Activated CD8-positive, alpha-beta T cell treated with anti-CD3 and anti-CD28 coated beads, Interleukin-2, amount 10 ng/mL, durations not matched to agents 7 days and 5 days (primary cell): ENCODE measurements at regions of chr5 and their contacts with region 1.

Region 1: DNA sequence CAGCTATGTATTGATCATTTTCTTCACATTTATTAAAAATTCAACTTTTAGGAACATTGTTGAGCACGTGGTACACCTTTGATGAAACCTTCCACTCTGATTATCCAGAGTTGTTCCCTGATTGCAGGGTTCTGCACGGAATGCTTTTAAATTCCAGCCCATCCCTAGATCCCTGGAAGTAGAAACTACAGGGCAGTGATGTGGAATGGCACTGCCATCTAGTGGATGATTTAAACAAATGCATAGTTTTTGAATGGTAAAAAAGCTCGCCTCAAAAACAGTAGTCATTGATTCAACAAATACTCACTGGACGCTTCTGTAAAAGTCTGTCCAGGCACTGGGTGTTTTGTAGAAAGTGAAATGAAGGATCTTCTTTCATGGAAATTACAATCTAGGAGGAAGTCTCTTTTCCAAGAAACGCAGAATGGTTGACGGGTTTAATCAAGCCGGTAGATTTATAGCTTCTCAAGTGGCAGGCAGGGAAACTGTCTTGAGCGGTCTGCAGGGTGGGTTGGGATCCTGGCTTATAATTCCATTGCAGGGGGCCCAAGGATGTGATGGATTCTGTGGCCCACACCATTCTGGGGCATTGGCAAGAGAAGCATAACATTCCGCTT is 118.4 kb downstream of the ARHGAP26 start:
- DNase-seq: peak; percentile 24
- ATAC-seq: no peak
- H3K4me3 Mint-ChIP-seq: no peak overlapping the region
- H3K27ac Mint-ChIP-seq: no peak overlapping the region
- H3K4me1 Mint-ChIP-seq: peaks cover 11% of the 10 kb centered on the region
- H3K27me3 Mint-ChIP-seq: no peaks in the 10 kb centered on the region

Region 2: GRCh38 chr5:142655339-142656267 is 233.0 kb before region 1 on chr5:
- CTCF ChIA-PET with region 1: interaction called, 18 read pairs
- POLR2A ChIA-PET with region 1: no interaction called
- DNase-seq: peak; percentile 73
- ATAC-seq: peak; percentile 94
- H3K4me3 Mint-ChIP-seq: no peak overlapping the region
- H3K27ac Mint-ChIP-seq: no peak overlapping the region
- H3K4me1 Mint-ChIP-seq: no peaks in the 10 kb centered on the region
- H3K27me3 Mint-ChIP-seq: peaks cover 18% of the 10 kb centered on the region

Region 3: GRCh38 chr5:142740474-142741242 is 147.9 kb before region 1 on chr5:
- CTCF ChIA-PET with region 1: interaction called, 445 read pairs
- POLR2A ChIA-PET with region 1: no interaction called
- DNase-seq: no peak
- ATAC-seq: no peak
- H3K4me3 Mint-ChIP-seq: no peak overlapping the region
- H3K27ac Mint-ChIP-seq: no peak overlapping the region
- H3K4me1 Mint-ChIP-seq: no peaks in the 10 kb centered on the region
- H3K27me3 Mint-ChIP-seq: peaks cover 9% of the 10 kb centered on the region

Region 4: DNA sequence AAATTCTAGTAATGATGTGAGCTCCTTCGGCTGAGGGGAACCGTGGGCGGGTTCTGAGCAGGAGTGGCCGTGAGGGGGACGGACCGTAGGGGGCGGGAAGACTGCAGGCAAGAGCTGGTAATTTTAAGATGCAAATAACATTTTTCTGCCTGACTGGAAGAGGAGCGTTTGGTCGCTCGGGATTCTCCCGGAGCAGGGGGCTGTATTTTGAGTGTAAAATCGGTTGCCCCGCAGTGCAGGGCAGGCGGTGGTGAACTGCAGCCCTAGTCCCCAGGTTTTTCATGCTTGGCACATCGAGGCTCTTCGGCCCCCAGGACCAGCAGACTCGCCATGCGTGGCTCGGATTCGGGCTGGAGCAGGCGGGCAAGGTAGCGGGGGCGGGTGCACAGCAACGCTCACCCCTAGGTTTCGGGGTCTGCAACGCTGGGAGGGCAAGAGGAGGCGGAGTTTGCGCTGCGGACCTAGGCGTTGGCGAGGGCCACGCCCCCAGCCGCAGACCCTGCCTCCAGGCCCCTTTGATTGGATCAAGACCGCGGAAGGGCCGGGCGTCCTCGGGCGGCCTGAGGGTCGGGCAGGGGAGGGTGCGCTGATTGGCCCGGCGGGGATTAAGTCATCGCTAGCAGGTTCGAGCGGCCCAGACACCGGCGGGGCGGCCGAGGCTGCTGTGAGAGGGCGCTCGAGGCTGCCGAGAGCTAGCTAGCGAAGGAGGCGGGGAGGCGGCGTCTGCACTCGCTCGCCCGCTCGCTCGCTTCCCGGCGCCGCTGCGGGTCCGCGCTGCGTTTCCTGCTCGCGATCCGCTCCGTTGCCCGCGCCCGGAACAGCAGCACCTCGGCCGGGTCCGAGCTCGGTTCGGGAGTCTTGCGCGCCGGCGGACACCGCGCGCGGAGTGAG is 118.6 kb before region 1 on chr5 and contains the start of gene ARHGAP26:
- CTCF ChIA-PET with region 1: interaction called, 11 read pairs
- POLR2A ChIA-PET with region 1: no interaction called
- DNase-seq: peak; percentile 96
- ATAC-seq: peak; percentile 96
- H3K4me3 Mint-ChIP-seq: peak within 1 kb of the TSS; percentile 96
- H3K27ac Mint-ChIP-seq: peak within 1 kb of the TSS; percentile 82
- H3K4me1 Mint-ChIP-seq: peaks cover 35% of the 10 kb centered on the region
- H3K27me3 Mint-ChIP-seq: peaks cover 3% of the 10 kb centered on the region
- total RNA-seq, gene ARHGAP26: 25.4 to 30.3 TPM

Region 5: DNA sequence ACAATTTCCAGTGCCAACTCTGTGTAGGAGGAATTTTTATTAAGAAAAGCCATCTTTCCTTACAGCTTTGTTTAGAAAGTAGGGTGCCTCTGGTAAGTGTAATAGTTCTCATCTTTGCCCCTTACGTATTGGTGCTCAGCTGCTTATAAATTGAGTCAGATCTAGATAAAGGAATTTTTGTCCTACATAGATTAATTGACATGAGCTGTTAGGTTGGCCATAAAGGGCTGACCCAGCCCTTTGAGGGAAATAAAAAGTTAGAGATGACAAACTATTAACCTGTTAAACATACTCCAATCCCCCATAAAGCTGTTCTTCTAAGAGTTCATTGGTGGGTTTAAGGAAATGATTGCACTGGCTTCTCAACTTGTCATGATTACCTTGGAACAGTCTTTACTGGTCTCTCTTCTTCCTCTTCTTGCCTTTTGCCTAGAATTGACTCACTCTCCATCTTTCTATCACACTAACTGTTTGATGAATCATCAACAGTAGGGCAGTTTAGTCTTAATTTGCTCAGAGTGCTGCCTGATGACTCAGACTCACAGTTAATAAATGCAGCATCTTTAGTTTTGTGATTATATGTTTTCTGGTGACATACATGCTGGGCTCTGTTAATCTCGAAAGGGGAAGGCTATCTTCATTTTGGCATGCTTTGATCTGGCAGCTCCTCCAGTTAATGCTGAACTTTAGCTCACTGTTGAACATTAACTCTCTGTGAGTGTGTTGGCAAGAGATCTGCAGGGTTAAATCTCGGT is 66.7 kb before region 1 on chr5:
- CTCF ChIA-PET with region 1: interaction called, 10 read pairs
- POLR2A ChIA-PET with region 1: no interaction called
- DNase-seq: no peak
- ATAC-seq: peak; percentile 60
- H3K4me3 Mint-ChIP-seq: no peak overlapping the region
- H3K27ac Mint-ChIP-seq: no peak overlapping the region
- H3K4me1 Mint-ChIP-seq: peaks cover 48% of the 10 kb centered on the region
- H3K27me3 Mint-ChIP-seq: no peaks in the 10 kb centered on the region

Region 6: DNA sequence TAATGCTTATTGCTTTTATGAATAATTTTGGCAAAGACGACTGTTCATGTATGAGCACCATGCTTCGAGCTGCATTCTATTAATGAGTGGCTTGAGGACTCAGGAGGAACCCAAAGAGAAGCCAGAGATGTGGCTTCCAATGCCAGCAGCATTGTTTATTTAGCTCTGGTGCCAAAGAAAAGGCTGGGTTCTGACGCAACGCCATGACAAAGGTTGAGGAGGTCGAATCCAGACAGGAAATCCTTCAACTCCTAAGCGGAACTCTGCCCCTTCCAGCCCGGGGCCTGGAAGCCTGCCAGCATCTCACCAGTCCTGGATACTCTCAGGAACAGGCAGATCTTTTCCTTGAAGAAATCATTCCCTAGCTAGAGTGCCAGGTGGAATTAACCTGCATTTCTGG is 14.0 kb before region 1 on chr5:
- CTCF ChIA-PET with region 1: interaction called, 24 read pairs
- POLR2A ChIA-PET with region 1: no interaction called
- DNase-seq: no peak
- ATAC-seq: no peak
- H3K4me3 Mint-ChIP-seq: no peak overlapping the region
- H3K27ac Mint-ChIP-seq: no peak overlapping the region
- H3K4me1 Mint-ChIP-seq: peaks cover 3% of the 10 kb centered on the region
- H3K27me3 Mint-ChIP-seq: no peaks in the 10 kb centered on the region

Region 7: GRCh38 chr5:142915813-142916424 is 27.3 kb after region 1 on chr5:
- CTCF ChIA-PET with region 1: interaction called, 20 read pairs
- POLR2A ChIA-PET with region 1: no interaction called
- DNase-seq: peak; percentile 27
- ATAC-seq: no peak
- H3K4me3 Mint-ChIP-seq: no peak overlapping the region
- H3K27ac Mint-ChIP-seq: no peak overlapping the region
- H3K4me1 Mint-ChIP-seq: no peaks in the 10 kb centered on the region
- H3K27me3 Mint-ChIP-seq: no peaks in the 10 kb centered on the region